ENCODE measurements at regions of chr5 and their contacts with region 1.

Region 1: DNA sequence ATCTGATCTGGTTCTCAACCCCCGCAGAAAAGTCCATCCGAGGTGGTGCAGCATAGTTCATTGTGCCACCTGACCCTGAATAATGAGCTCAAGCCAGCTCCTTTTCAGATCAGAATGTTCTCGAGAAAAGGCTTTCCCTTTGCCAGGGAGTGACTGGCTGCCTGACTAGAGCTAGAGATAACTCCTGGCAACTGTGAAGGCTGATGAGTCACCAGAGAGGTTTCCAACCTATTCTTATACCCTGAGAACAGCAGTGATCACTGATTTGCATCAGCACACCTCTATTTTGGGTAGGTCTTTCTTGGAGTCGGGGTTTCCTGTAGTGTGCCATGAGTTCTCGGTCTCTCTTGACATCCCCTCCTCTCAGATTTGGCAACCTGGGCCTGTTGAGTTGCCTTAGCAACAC is 127.9 kb downstream of the PIK3R1 start:
- DNase-seq: peak; percentile 78 to 92
- H3K4me3 ChIP-seq: no peak overlapping the region
- H3K27ac ChIP-seq: peak overlapping the region; percentile 78 to 80
- H3K4me1 ChIP-seq: peaks cover 0 to 18% of the 10 kb centered on the region in 2 donors
- H3K27me3 ChIP-seq: no peaks in the 10 kb centered on the region
- CTCF ChIP-seq: no peak

Region 2: GRCh38 chr5:68295772-68296171 is 47.7 kb before region 1 on chr5:
- intact Hi-C with region 1: no loop called
- DNase-seq: no peak
- H3K4me3 ChIP-seq: no peak overlapping the region
- H3K27ac ChIP-seq: no peak overlapping the region
- H3K4me1 ChIP-seq: peaks cover 4 to 14% of the 10 kb centered on the region in 2 donors
- H3K27me3 ChIP-seq: no peaks in the 10 kb centered on the region
- CTCF ChIP-seq: no peak

Region 3: DNA sequence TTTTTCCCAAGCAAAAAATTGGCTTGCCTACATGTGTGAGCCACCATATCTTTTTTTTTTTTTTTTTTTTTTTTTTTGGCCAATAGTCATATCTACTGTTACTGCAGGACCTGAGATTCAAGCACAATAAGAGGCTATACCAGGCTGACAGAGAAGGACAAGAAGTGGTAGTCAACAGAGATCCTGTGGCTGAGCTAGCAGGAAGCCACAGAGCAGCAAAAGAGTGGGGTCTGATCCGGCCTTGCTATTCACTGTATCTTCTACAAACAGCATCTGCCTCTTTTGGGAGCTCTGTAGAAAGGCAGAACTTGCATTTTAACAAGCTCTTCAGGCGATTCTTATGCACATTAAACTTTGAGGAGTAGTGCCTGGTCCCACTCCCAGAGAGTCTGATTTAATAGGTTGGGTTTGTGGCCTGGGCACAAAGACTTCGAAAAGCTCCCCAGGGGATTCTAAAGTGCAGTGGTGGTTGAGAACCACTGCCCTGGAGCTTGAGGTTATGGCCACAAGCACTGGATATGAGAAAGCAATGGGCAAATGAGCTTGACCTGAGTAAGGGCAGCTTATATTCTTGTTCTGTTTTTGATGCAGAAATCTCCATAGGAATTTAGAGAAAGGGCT is 34.9 kb after region 1 on chr5:
- intact Hi-C with region 1: loop called (anchors 2 kb)
- DNase-seq: no peak
- H3K4me3 ChIP-seq: no peak overlapping the region
- H3K27ac ChIP-seq: peak overlapping the region; percentile 13 to 56
- H3K4me1 ChIP-seq: peaks cover 0 to 20% of the 10 kb centered on the region in 2 donors
- H3K27me3 ChIP-seq: no peaks in the 10 kb centered on the region
- CTCF ChIP-seq: no peak

Region 4: DNA sequence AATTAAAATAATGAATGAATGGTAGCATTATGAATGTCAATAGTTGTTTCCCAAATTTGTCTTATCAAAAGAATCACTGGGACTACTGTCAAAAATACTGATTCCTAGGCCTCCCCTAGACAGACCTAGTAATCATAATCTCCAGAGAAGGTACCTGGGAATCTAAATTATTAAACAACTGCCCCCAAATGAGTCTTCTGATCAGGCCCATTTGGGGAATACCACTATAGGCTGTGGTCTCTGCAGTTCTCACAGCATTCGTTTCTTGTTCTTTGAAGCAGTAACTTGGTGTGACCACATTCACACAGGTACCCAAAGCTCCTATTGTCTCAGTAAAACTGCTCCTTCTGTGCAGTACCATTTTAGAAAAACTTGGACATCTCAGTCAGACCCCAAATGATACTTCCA is 103.1 kb after region 1 on chr5:
- intact Hi-C with region 1: loop called (anchors 5 kb)
- DNase-seq: no peak
- H3K4me3 ChIP-seq: no peak overlapping the region
- H3K27ac ChIP-seq: no peak overlapping the region
- H3K4me1 ChIP-seq: peaks cover 0 to 16% of the 10 kb centered on the region in 2 donors
- H3K27me3 ChIP-seq: no peaks in the 10 kb centered on the region
- CTCF ChIP-seq: no peak

Region 5: GRCh38 chr5:68505917-68506860 is 162.8 kb after region 1 on chr5:
- intact Hi-C with region 1: no loop called
- DNase-seq: no peak
- H3K4me3 ChIP-seq: no peak overlapping the region
- H3K27ac ChIP-seq: no peak overlapping the region
- H3K4me1 ChIP-seq: no peaks in the 10 kb centered on the region
- H3K27me3 ChIP-seq: no peaks in the 10 kb centered on the region
- CTCF ChIP-seq: no peak

Measured in ascending aorta (tissue), 2 donors.